ENCODE measurements at regions of chr9 and their contacts with region 1.

Region 1: DNA sequence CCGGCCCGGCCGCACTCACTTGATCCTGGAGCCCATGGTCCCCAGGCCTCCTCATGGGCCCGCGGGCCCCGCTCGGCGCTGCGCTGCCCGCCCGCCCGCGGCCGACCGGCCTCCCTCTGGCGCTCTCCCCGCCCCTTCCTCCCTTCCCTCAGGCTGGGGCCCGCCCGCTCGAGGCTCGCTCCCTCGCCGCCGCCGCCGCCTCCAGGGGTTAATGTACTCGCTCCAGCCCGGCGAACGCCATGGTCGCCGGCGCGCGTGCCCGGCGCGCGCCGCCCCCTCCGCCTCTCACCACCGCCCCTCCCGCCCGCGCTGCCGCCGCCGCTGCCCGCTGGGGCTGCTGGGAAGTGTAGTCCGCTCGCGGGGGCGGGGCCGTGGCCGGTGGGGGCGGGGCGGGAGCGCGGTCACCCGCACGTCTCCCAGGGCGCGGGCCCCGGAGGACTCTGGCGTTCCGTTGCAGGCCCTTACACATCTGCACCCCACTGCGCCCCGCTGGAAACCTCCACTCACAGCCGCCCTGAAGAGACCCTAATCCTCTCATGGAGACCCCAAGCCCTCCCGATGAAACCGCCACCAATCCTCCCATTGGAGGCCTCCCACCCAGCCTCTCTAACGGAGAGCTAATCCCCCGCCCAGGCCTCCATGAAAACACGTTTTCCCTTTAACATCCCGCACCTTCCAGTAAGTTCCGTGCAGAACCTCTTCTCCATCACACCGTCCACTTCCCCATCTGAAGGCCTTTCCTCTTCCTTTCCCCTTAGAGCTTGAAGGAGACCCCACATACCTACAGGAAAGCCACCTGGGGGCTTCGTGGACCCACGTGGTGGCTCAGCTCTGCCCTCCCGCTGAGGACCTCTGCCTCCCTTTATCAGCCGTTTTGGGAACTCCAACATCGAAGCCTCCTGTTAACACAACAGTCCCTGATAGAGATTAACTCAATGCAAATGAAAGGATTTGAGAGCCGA is at the start of gene DENND1A:
- DNase-seq: peak; percentile 93 to 96 (median 95)
- ATAC-seq: peak; percentile 78 to 98 (median 95)
- H3K4me3 ChIP-seq: peak within 1 kb of the TSS; percentile 63 to 94 (median 78)
- H3K27ac ChIP-seq: peak within 1 kb of the TSS in 11 of 12 donors; percentile 41 to 85 (median 70)
- H3K4me1 ChIP-seq: peaks cover 0 to 47% (median 15%) of the 10 kb centered on the region in 12 donors
- H3K27me3 ChIP-seq: no peaks in the 10 kb centered on the region
- CTCF ChIP-seq: no peak
- POLR2A ChIP-seq: peak in 1 of 2 donors; percentile 52
- total RNA-seq, gene DENND1A: 10.6 to 24.0 (median 15.7) TPM

Region 2: DNA sequence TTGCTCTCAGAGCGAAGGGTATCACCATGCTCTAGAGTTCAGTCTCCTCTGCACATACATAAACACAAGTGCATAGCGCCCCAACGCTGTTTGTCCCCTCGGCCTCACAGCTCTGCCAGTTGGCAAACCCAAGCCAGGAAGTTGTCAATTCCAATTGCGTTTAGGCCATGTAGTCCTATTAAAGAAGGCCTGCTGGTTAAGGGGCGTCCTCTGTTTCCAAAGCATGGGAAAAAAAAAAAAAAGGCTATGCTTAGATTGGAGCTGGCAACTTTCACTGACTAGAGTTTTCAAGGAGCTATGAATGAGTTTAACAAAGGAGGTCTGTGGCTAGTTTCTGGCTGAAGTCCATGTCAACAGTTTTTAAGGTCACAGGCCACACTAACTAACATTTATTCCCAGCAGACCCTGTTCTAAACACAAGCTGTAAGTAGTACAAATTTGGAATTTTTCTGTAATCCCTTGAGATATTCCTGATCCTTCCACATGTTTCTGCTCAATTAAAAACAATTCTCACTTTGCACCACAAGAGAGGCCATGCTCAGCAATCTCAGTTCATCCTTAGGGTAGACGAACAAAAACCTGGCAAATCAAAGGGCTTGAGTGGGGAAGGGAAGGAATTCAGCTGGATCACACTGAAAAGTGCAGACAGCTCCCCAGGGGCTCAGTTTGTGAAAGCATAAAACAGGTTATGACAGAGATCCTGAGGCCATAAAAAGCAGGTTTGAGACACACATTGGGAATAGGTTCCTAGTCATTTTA is 188.0 kb before region 1 on chr9:
- intact Hi-C with region 1: loop called in 3 of 10 experiments (anchors 2 to 10 kb)
- DNase-seq: peak; percentile 25 to 65 (median 42)
- ATAC-seq: peak; percentile 73 to 83 (median 82)
- H3K4me3 ChIP-seq: peak overlapping the region in 1 of 12 donors; percentile 9
- H3K27ac ChIP-seq: peak overlapping the region in 10 of 12 donors; percentile 0 to 48 (median 16)
- H3K4me1 ChIP-seq: peaks cover 0 to 37% (median 23%) of the 10 kb centered on the region in 12 donors
- H3K27me3 ChIP-seq: no peaks in the 10 kb centered on the region
- CTCF ChIP-seq: no peak
- POLR2A ChIP-seq: no peak

Region 3: GRCh38 chr9:123863164-123863855 is 66.8 kb before region 1 on chr9:
- intact Hi-C with region 1: loop called in 1 of 10 experiments (anchors 5 kb)
- DNase-seq: no peak
- ATAC-seq: peak in 1 of 4 donors; percentile 49
- H3K4me3 ChIP-seq: no peak overlapping the region
- H3K27ac ChIP-seq: peak overlapping the region in 1 of 12 donors; percentile 84
- H3K4me1 ChIP-seq: peaks cover 0 to 75% (median 11%) of the 10 kb centered on the region in 12 donors
- H3K27me3 ChIP-seq: no peaks in the 10 kb centered on the region
- CTCF ChIP-seq: no peak
- POLR2A ChIP-seq: no peak

Region 4: GRCh38 chr9:123940721-123941523 is 10.8 kb after region 1 on chr9:
- intact Hi-C with region 1: no loop called
- DNase-seq: no peak
- ATAC-seq: no peak
- H3K4me3 ChIP-seq: no peak overlapping the region
- H3K27ac ChIP-seq: no peak overlapping the region
- H3K4me1 ChIP-seq: no peaks in the 10 kb centered on the region
- H3K27me3 ChIP-seq: peaks cover 0 to 13% (median 0%) of the 10 kb centered on the region in 9 donors
- CTCF ChIP-seq: no peak
- POLR2A ChIP-seq: no peak